ENCODE measurements at regions of chr2 and their contacts with region 1.

Region 1: DNA sequence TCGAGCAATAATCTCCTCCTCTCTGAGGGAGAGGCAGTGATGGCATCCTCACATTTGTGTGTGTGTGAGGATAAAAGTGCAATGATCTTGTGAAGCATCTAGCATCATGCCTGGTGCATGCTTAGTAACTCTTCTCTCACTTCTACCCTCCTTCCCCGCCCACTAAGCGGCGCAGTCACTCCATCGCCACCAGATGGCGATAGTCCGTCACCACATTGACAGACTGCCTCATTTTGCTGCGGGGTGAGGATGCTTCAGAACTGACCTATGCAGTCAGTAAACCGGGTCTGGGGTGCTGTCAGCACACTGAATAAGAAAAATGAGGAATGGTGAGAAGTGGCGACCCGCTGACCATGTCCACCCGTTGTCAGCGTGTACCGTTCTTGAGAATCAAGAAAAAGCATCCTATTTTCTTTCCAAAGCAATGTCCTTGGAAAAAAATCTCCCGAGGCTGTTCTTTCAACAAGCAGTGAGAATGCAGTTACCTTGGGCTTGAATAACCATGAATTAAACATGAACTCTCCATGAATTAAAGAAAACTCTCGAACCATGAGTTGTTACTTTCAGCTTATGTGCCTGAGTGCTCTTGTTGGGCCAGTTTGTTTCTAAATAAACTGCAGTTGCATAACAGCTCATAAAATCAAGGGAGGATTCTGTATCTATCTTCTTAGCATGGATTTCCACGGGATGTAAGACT is 37.3 kb upstream of the TMEM177 start:
- DNase-seq: peak; percentile 81
- H3K4me3 ChIP-seq: no peak overlapping the region
- H3K27ac ChIP-seq: no peak overlapping the region
- H3K4me1 ChIP-seq: no peaks in the 10 kb centered on the region
- H3K27me3 ChIP-seq: no peaks in the 10 kb centered on the region
- CTCF ChIP-seq: peak; percentile 97

Region 2: DNA sequence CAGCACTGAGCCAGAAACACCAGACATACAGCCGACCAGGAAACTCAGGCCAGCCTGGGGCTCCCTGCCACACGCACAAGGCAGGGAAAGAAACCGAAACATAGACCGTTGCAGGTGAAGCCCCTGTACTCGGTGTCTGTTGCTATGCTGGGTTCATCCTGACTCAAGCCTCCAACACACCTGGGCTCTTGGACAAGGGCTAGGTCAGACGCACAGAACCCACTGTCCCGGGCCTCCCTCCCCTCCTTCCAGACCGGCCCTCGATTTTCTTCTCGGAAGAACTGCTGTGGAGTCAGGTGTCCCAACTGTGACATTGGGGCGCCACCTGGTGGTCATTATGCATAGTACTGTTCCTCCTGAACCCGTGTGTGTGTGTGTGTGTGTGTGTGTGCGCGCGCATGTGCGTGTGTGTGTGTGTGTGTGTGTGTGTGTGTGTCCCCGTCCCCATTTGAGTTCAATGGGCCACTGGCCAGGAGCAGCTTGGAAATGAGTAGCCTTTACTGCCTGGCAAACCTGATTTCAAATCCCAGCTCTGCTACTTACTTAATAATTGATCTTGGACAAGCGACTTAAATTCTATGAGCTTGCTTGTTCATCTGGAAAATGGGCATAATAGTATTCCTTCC is 1038.5 kb after region 1 on chr2:
- CTCF ChIA-PET with region 1: interaction called, 6 read pairs
- POLR2A ChIA-PET with region 1: no interaction called
- intact Hi-C with region 1: loop called (anchors 10 kb)
- DNase-seq: peak; percentile 88
- H3K4me3 ChIP-seq: no peak overlapping the region
- H3K27ac ChIP-seq: no peak overlapping the region
- H3K4me1 ChIP-seq: no peaks in the 10 kb centered on the region
- H3K27me3 ChIP-seq: no peaks in the 10 kb centered on the region
- CTCF ChIP-seq: peak; percentile 74

Region 3: DNA sequence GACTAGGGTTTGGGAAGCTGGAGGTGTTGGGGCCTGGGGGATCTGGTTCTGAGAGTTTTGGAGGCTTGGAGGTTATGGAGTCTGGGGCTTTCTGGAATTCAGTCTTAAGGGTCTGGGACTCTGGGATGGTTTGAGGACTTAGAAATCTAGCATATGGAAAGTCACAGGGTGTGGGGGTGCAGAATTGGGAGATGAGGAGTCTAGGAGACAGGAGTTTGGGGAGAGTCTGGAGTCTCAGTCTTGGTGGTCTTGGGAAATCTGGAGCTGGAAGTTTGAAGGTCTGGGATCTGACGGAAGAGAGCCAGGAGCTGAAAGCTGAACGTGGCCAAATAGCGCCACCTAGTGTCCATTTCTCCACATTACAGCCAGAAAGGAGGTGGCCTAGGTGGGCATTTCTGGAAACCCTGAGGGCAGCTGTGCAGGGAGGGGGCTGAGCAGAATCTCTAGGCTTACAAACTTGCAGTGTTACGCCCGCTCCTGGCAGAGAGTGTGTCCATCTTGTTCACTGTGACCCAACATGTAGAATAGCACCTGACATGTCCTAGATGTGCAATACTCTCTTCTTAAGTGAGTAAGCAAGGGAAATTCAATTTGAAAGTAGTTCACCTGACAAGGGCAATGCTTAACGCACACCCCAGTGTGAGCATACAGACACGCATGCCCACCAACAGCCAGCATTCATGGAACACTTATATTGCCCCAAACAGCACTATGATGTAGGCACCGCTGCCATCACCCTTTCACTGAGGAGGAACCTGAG is 1438.5 kb after region 1 on chr2:
- CTCF ChIA-PET with region 1: interaction called, 12 read pairs
- POLR2A ChIA-PET with region 1: no interaction called
- intact Hi-C with region 1: no loop called
- DNase-seq: peak; percentile 72
- H3K4me3 ChIP-seq: no peak overlapping the region
- H3K27ac ChIP-seq: no peak overlapping the region
- H3K4me1 ChIP-seq: no peaks in the 10 kb centered on the region
- H3K27me3 ChIP-seq: no peaks in the 10 kb centered on the region
- CTCF ChIP-seq: peak; percentile 86